ENCODE measurements at regions of chr3 and their contacts with region 1.

Region 1: DNA sequence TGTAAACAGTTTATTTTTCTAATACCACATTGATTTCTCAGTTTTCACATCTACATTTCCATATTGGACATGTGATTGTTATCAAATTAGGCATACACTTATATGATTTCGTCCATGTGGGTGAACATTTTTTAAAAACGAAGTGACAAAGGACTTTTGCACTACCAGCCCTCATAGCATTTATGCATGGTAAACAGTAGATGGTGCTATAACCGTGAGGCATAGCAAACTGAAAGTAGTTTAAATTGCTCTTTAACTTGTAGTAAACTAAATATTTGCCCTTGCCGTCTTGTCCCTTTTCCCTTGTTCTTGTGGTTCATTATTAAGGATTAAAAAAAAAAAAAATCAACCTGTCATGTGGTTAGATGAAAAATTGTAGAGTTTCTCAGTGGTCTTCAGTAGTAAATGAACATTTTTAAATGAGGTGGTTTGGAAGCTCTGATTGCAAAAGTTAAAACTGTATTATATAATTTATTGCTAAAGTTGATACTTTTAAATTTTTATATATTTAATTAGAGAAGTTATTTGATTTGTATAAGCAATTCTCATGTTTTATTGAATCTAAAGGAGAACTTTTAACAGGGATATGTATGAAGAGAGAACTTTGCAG is 24.0 kb downstream of the STX19 start:
- DNase-seq: no peak
- H3K4me3 ChIP-seq: peak overlapping the region in 41 of 59 donors; percentile 3 to 53 (median 28)
- H3K27ac ChIP-seq: no peak overlapping the region
- H3K27me3 ChIP-seq: no peaks in the 10 kb centered on the region
- CTCF ChIP-seq: peak; percentile 55 to 91 (median 76)

Region 2: GRCh38 chr3:93973131-93974126 is 31.0 kb before region 1 on chr3 and contains the start of gene PROS1:
- intact Hi-C with region 1: no loop called
- DNase-seq: peak; percentile 34 to 79 (median 60)
- H3K4me3 ChIP-seq: peak within 1 kb of the TSS; percentile 29 to 83 (median 70)
- H3K27ac ChIP-seq: peak within 1 kb of the TSS in 57 of 59 donors; percentile 30 to 92 (median 82)
- H3K27me3 ChIP-seq: no peaks in the 10 kb centered on the region
- CTCF ChIP-seq: peak in 19 of 56 donors; percentile 2 to 43 (median 21)
- total RNA-seq, gene PROS1: 3.8 to 18.6 (median 8.6) TPM

Region 3: DNA sequence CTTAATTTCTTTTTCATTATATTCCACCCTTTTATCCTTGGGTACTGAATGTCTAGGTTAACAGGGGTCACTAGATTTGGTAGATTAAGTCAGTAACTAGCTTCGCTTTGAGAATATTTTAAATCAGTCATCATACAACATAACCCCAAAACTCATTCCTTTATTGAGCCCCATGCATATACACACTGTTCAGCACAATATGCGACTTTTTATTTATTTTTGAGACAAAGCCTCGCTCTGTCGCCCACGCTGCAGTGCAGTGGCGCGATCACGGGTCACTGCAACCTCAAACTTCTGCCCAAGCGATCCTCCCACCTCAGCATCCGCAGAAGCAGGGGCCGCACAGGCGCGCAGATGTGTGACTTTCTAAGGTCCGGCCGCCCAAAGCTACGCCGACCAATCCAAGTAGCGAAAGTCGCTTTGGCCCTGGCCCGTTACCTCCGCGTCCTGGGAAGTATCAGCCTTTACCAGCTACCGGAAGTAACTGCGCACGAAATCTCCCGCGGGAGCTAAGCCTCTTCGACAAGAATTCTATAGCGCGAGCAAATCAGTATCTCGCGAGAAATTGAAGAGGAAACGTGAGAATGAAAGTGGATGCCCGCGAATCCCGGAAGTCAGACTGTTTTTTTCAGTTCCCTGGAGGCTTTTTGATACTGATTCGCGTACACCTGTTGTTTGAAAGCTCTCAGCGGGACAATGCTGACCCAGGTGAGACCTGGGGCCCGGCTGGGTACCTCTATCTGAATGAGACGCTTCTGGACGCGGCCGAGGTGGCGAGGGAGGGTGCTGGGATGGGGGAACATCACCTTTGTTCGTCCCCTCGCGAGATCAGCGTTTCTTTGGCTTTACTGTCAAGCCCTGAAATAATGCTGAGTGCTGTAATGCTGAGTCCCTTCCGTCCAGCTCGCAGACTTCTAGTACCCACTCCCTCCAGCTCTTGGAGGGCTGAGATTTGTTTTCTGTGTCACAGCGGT is 58.3 kb after region 1 on chr3 and contains the starts of genes DHFR2 and NSUN3:
- intact Hi-C with region 1: loop called (anchors 5 to 10 kb)
- DNase-seq: peak; percentile 66 to 92 (median 84)
- H3K4me3 ChIP-seq: peak within 1 kb of the TSS; percentile 56 to 95 (median 84)
- H3K27ac ChIP-seq: peak within 1 kb of the TSS; percentile 71 to 98 (median 93)
- H3K27me3 ChIP-seq: no peaks in the 10 kb centered on the region
- CTCF ChIP-seq: peak in 15 of 56 donors; percentile 3 to 48 (median 19)
- total RNA-seq, gene DHFR2: 3.7 to 20.5 (median 9.2) TPM
- total RNA-seq, gene NSUN3: 8.3 to 22.2 (median 16.8) TPM

Region 4: DNA sequence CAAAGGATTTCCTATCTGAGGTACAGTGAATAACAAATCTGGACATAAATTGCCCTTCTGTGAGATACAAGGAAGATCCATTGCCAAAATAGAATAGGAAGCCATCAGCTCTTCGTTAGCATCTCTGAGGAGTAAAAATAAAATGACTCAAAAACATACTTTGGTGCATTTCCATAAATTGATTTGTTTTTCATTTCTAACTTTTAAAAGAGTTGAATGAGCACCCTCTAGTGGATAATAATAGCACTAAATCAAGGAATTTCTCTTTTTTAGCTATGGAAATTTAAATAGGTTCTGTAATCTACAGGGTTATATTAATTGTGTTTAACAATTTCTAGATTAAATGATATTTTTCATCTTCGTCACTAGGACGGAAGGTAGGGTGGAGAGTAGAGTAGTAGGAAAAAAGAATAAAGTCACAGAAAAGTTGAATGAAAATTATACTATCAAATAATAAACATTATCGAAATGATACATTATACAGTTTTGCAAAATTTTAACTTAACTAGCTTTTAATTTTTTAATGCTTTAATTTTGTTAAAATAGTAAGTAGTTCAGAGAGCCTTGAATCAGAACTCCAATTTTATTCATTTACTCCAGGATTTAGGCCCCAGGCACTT is 64.9 kb after region 1 on chr3:
- intact Hi-C with region 1: loop called (anchors 5 to 10 kb)
- DNase-seq: no peak
- H3K4me3 ChIP-seq: peak overlapping the region in 1 of 59 donors; percentile 7
- H3K27ac ChIP-seq: no peak overlapping the region
- H3K27me3 ChIP-seq: no peaks in the 10 kb centered on the region
- CTCF ChIP-seq: peak; percentile 45 to 88 (median 72)

Region 5: GRCh38 chr3:94234177-94234788 is 229.9 kb after region 1 on chr3:
- intact Hi-C with region 1: no loop called
- DNase-seq: peak in 1 of 10 donors; percentile 10
- H3K4me3 ChIP-seq: no peak overlapping the region
- H3K27ac ChIP-seq: no peak overlapping the region
- H3K27me3 ChIP-seq: no peaks in the 10 kb centered on the region
- CTCF ChIP-seq: peak in 55 of 56 donors; percentile 24 to 73 (median 59)

Measured in dorsolateral prefrontal cortex (tissue), 120 donors.